ENCODE measurements at regions of chr10 and their contacts with region 1.

Region 1: GRCh38 chr10:128035557-128035973 is 90.7 kb downstream of the MKI67 start:
- DNase-seq: peak; percentile 43 to 64 (median 52)
- H3K4me3 ChIP-seq: no peak overlapping the region
- H3K4me3 Mint-ChIP-seq: no peak overlapping the region
- H3K27ac ChIP-seq: no peak overlapping the region
- H3K27ac Mint-ChIP-seq: no peak overlapping the region
- H3K4me1 ChIP-seq: no peaks in the 10 kb centered on the region
- H3K4me1 Mint-ChIP-seq: peaks cover 0 to 4% (median 2%) of the 10 kb centered on the region in 4 donors
- H3K27me3 ChIP-seq: no peaks in the 10 kb centered on the region
- H3K27me3 Mint-ChIP-seq: no peaks in the 10 kb centered on the region

Region 2: GRCh38 chr10:128011175-128011979 is 24.2 kb before region 1 on chr10:
- CTCF ChIA-PET with region 1: interaction called, 13 read pairs
- POLR2A ChIA-PET with region 1: no interaction called
- intact Hi-C with region 1: no loop called
- DNase-seq: peak; percentile 77 to 89 (median 83)
- H3K4me3 ChIP-seq: no peak overlapping the region
- H3K4me3 Mint-ChIP-seq: peak overlapping the region in 5 of 8 donors; percentile 14 to 50 (median 20)
- H3K27ac ChIP-seq: no peak overlapping the region
- H3K27ac Mint-ChIP-seq: peak overlapping the region in 5 of 7 donors; percentile 10 to 83 (median 62)
- H3K4me1 ChIP-seq: peaks cover 3% of the 10 kb centered on the region
- H3K4me1 Mint-ChIP-seq: peaks cover 6 to 9% (median 7%) of the 10 kb centered on the region in 4 donors
- H3K27me3 ChIP-seq: no peaks in the 10 kb centered on the region
- H3K27me3 Mint-ChIP-seq: peaks cover 2 to 12% of the 10 kb centered on the region in 2 donors

Region 3: GRCh38 chr10:128024426-128024825 is 11.1 kb before region 1 on chr10:
- CTCF ChIA-PET with region 1: interaction called, 12 read pairs
- POLR2A ChIA-PET with region 1: no interaction called
- intact Hi-C with region 1: no loop called
- DNase-seq: no peak
- H3K4me3 ChIP-seq: no peak overlapping the region
- H3K4me3 Mint-ChIP-seq: no peak overlapping the region
- H3K27ac ChIP-seq: no peak overlapping the region
- H3K27ac Mint-ChIP-seq: no peak overlapping the region
- H3K4me1 ChIP-seq: no peaks in the 10 kb centered on the region
- H3K4me1 Mint-ChIP-seq: peaks cover 0 to 11% (median 2%) of the 10 kb centered on the region in 4 donors
- H3K27me3 ChIP-seq: no peaks in the 10 kb centered on the region
- H3K27me3 Mint-ChIP-seq: peaks cover 0 to 2% of the 10 kb centered on the region in 2 donors

Region 4: GRCh38 chr10:128064108-128064969 is 28.8 kb after region 1 on chr10:
- CTCF ChIA-PET with region 1: interaction called, 509 read pairs
- POLR2A ChIA-PET with region 1: interaction called, 34 read pairs
- intact Hi-C with region 1: loop called (anchors 1 kb)
- DNase-seq: peak; percentile 71 to 89 (median 75)
- H3K4me3 ChIP-seq: peak overlapping the region in 1 of 2 donors; percentile 54
- H3K4me3 Mint-ChIP-seq: peak overlapping the region; percentile 71 to 92 (median 80)
- H3K27ac ChIP-seq: peak overlapping the region; percentile 67
- H3K27ac Mint-ChIP-seq: peak overlapping the region; percentile 83 to 95 (median 90)
- H3K4me1 ChIP-seq: peaks cover 56% of the 10 kb centered on the region
- H3K4me1 Mint-ChIP-seq: peaks cover 60 to 87% (median 72%) of the 10 kb centered on the region in 4 donors
- H3K27me3 ChIP-seq: no peaks in the 10 kb centered on the region
- H3K27me3 Mint-ChIP-seq: no peaks in the 10 kb centered on the region

Region 5: GRCh38 chr10:128069351-128070051 is 33.9 kb after region 1 on chr10:
- CTCF ChIA-PET with region 1: interaction called, 509 read pairs
- POLR2A ChIA-PET with region 1: interaction called, 34 read pairs
- intact Hi-C with region 1: loop called (anchors 1 kb)
- DNase-seq: peak; percentile 74 to 80 (median 78)
- H3K4me3 ChIP-seq: no peak overlapping the region
- H3K4me3 Mint-ChIP-seq: peak overlapping the region in 2 of 8 donors; percentile 13 to 61
- H3K27ac ChIP-seq: no peak overlapping the region
- H3K27ac Mint-ChIP-seq: peak overlapping the region in 5 of 7 donors; percentile 55 to 82 (median 74)
- H3K4me1 ChIP-seq: peaks cover 29% of the 10 kb centered on the region
- H3K4me1 Mint-ChIP-seq: peaks cover 39 to 54% (median 47%) of the 10 kb centered on the region in 4 donors
- H3K27me3 ChIP-seq: no peaks in the 10 kb centered on the region
- H3K27me3 Mint-ChIP-seq: no peaks in the 10 kb centered on the region

Region 6: GRCh38 chr10:128078136-128078969 is 42.8 kb after region 1 on chr10:
- CTCF ChIA-PET with region 1: interaction called, 509 read pairs
- POLR2A ChIA-PET with region 1: no interaction called
- intact Hi-C with region 1: no loop called
- DNase-seq: peak in 3 of 5 donors; percentile 35 to 36 (median 35)
- H3K4me3 ChIP-seq: no peak overlapping the region
- H3K4me3 Mint-ChIP-seq: no peak overlapping the region
- H3K27ac ChIP-seq: no peak overlapping the region
- H3K27ac Mint-ChIP-seq: no peak overlapping the region
- H3K4me1 ChIP-seq: no peaks in the 10 kb centered on the region
- H3K4me1 Mint-ChIP-seq: peaks cover 4 to 8% (median 8%) of the 10 kb centered on the region in 4 donors
- H3K27me3 ChIP-seq: no peaks in the 10 kb centered on the region
- H3K27me3 Mint-ChIP-seq: no peaks in the 10 kb centered on the region

Region 7: GRCh38 chr10:128221117-128221516 is 185.6 kb after region 1 on chr10:
- CTCF ChIA-PET with region 1: no interaction called
- POLR2A ChIA-PET with region 1: no interaction called
- intact Hi-C with region 1: no loop called
- DNase-seq: no peak
- H3K4me3 ChIP-seq: no peak overlapping the region
- H3K4me3 Mint-ChIP-seq: no peak overlapping the region
- H3K27ac ChIP-seq: no peak overlapping the region
- H3K27ac Mint-ChIP-seq: no peak overlapping the region
- H3K4me1 ChIP-seq: peaks cover 3% of the 10 kb centered on the region
- H3K4me1 Mint-ChIP-seq: peaks cover 6 to 12% (median 10%) of the 10 kb centered on the region in 4 donors
- H3K27me3 ChIP-seq: no peaks in the 10 kb centered on the region
- H3K27me3 Mint-ChIP-seq: peaks cover 12 to 15% of the 10 kb centered on the region in 2 donors

Region 8: GRCh38 chr10:129101232-129101980 is 1065.8 kb after region 1 on chr10:
- CTCF ChIA-PET with region 1: no interaction called
- POLR2A ChIA-PET with region 1: no interaction called
- intact Hi-C with region 1: no loop called
- DNase-seq: peak in 2 of 5 donors; percentile 0 to 9
- H3K4me3 ChIP-seq: no peak overlapping the region
- H3K4me3 Mint-ChIP-seq: peak overlapping the region in 1 of 8 donors; percentile 17
- H3K27ac ChIP-seq: no peak overlapping the region
- H3K27ac Mint-ChIP-seq: peak overlapping the region in 3 of 7 donors; percentile 1 to 72 (median 31)
- H3K4me1 ChIP-seq: peaks cover 8% of the 10 kb centered on the region
- H3K4me1 Mint-ChIP-seq: peaks cover 6 to 40% (median 28%) of the 10 kb centered on the region in 4 donors
- H3K27me3 ChIP-seq: no peaks in the 10 kb centered on the region
- H3K27me3 Mint-ChIP-seq: no peaks in the 10 kb centered on the region

Measured in CD4-positive, alpha-beta memory T cell (primary cell).